ENCODE measurements at regions of chr3 and their contacts with region 1.

Region 1: GRCh38 chr3:128794770-128795649 is 69.0 kb downstream of the RAB7A start:
- DNase-seq: peak; percentile 41 to 75 (median 65)
- H3K4me3 ChIP-seq: no peak overlapping the region
- H3K4me3 Mint-ChIP-seq: peak overlapping the region in 1 of 7 donors; percentile 28
- H3K27ac ChIP-seq: no peak overlapping the region
- H3K27ac Mint-ChIP-seq: peak overlapping the region; percentile 3 to 79 (median 70)
- H3K4me1 ChIP-seq: peaks cover 54% of the 10 kb centered on the region
- H3K4me1 Mint-ChIP-seq: peaks cover 34 to 59% (median 59%) of the 10 kb centered on the region in 3 donors
- H3K27me3 ChIP-seq: no peaks in the 10 kb centered on the region
- H3K27me3 Mint-ChIP-seq: no peaks in the 10 kb centered on the region

Region 2: DNA sequence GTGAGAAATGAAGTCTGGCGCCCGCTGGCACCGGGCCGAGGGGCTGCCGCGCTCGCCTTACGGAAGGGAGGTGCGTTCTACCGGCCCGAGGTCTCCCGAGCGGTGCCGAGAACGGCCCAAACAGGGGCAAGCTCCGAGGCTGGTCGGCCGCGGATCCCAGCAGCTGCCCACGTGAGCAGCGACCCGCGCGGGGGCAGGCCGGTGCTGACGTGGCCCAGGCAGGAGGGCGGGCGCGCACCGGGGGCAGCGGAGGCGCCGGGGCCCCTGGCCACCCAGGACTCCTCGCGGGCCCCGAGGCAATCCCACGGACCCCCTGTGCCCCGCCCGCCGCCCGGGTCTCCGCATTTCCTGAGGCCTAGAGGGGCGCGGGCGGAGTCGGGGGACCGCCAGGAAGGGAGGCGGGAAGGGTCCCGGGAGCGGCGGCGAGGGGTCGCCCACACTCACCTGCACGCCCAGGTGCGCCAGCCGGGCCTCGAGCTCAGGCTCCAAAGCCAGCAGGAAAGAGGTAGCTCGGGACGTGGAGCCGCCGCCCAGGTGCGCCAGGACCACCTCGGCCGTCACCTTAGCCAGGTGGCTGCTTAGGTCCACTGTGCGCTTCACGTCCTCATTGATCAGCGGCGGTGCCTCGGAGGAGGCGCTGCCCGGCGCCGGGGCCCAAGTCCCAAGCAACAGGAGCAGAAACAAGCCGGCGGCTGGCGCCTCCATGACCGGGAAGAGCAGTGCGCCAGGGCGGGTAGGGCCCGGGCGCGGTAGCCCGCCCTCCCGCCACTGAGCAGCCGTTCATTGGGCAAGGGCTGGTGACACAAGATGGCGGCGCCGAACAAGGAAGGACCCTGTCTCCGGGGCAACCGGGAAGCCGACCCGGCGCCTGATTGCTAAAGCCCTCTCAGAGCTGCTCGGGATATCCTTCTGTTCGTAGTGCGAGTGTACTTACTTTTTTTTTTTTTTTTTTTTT is 144.6 kb before region 1 on chr3 and contains the start of gene RPN1:
- CTCF ChIA-PET with region 1: interaction called, 10 read pairs
- POLR2A ChIA-PET with region 1: no interaction called
- DNase-seq: peak; percentile 95 to 98 (median 97)
- H3K4me3 ChIP-seq: peak within 1 kb of the TSS; percentile 81
- H3K4me3 Mint-ChIP-seq: peak within 1 kb of the TSS; percentile 86 to 100 (median 87)
- H3K27ac ChIP-seq: peak within 1 kb of the TSS; percentile 96
- H3K27ac Mint-ChIP-seq: peak within 1 kb of the TSS; percentile 87 to 99 (median 92)
- H3K4me1 ChIP-seq: peaks cover 34% of the 10 kb centered on the region
- H3K4me1 Mint-ChIP-seq: peaks cover 35 to 61% (median 46%) of the 10 kb centered on the region in 3 donors
- H3K27me3 ChIP-seq: no peaks in the 10 kb centered on the region
- H3K27me3 Mint-ChIP-seq: peaks cover 0 to 2% of the 10 kb centered on the region in 2 donors
- total RNA-seq, gene RPN1: 188 to 194 TPM

Region 3: GRCh38 chr3:128725932-128726690 is 68.9 kb before region 1 on chr3 and contains the start of gene RAB7A:
- CTCF ChIA-PET with region 1: interaction called, 11 read pairs
- POLR2A ChIA-PET with region 1: no interaction called
- DNase-seq: peak; percentile 95 to 98 (median 96)
- H3K4me3 ChIP-seq: peak within 1 kb of the TSS; percentile 91
- H3K4me3 Mint-ChIP-seq: peak within 1 kb of the TSS; percentile 89 to 99 (median 97)
- H3K27ac ChIP-seq: peak within 1 kb of the TSS; percentile 92
- H3K27ac Mint-ChIP-seq: peak within 1 kb of the TSS; percentile 86 to 99 (median 96)
- H3K4me1 ChIP-seq: peaks cover 50% of the 10 kb centered on the region
- H3K4me1 Mint-ChIP-seq: peaks cover 46 to 58% (median 56%) of the 10 kb centered on the region in 3 donors
- H3K27me3 ChIP-seq: no peaks in the 10 kb centered on the region
- H3K27me3 Mint-ChIP-seq: peaks cover 0 to 8% of the 10 kb centered on the region in 2 donors
- total RNA-seq, gene RAB7A: 260 to 285 TPM

Region 4: DNA sequence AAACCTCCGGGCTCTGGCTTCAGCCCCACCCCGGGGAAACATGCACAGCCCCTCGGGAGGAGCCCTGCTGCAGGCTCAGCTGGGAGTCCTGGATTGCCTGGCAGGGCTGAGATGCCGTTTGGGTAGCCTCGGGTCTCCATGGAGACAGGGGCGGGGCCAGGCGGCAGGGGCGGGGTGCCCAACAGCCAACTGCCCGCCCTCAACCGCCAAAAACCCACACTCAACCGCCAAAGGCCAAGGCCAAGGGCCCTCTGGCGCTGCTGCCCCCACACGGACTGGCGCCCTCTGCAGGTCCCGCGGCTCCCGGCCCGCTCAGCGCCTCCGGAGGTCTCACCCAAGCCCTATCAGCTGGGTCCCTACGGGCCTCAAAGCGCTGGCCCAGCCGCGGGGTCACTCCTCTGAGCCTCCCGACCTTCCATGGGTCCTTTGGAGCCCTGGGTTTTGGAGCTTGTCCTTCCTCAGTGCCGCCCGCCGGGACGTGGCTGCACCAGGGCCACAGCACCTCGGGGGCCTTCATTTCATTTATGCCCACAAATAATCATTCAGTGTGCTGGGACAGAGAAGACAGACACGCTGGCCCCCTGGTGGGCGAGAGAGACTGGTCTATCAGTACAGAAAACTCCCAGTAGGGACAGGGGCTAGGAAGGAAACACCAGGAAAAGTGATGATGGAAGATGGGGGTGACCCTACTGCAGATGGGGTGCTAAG is 50.9 kb after region 1 on chr3:
- CTCF ChIA-PET with region 1: interaction called, 20 read pairs
- POLR2A ChIA-PET with region 1: no interaction called
- DNase-seq: peak; percentile 69 to 84 (median 70)
- H3K4me3 ChIP-seq: peak overlapping the region; percentile 54
- H3K4me3 Mint-ChIP-seq: peak overlapping the region; percentile 46 to 95 (median 83)
- H3K27ac ChIP-seq: peak overlapping the region; percentile 29
- H3K27ac Mint-ChIP-seq: peak overlapping the region in 7 of 8 donors; percentile 27 to 90 (median 79)
- H3K4me1 ChIP-seq: peaks cover 11% of the 10 kb centered on the region
- H3K4me1 Mint-ChIP-seq: peaks cover 8 to 13% (median 12%) of the 10 kb centered on the region in 3 donors
- H3K27me3 ChIP-seq: no peaks in the 10 kb centered on the region
- H3K27me3 Mint-ChIP-seq: no peaks in the 10 kb centered on the region

Region 5: DNA sequence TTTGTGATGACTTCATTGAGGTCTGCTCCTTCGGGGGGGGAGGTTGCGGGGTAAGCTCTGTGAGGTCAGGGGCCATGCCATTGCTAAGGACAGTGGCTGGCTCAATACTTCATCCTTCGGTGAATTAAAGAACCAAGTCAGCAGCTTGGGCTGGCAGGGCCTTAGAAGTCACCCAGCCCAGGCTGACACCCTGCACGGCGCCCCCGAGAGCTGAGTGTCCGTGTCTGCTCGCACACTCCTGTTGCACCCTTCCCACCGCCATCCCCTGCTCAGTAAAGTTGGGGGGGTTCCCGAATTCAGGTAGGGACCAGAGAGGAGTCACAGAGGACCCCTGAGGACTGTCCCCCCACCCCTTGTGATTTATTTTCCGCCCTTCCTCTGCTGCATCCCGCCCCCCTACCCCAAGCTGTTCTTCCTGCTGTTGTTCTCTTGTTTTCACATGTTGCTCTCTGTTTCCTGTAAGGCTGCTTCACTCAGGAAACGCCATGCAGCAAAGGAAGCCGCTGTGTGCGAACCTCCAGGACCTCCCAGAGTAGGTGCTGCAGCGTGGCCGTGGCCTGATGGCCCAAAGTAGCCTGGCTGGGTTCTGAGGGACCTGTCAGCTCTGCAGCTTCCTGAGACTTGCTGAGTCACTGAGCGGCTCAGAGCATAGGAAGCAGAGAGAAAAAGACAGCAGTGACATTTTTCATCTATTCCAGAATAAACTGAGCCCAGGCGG is 220.5 kb after region 1 on chr3:
- CTCF ChIA-PET with region 1: no interaction called
- POLR2A ChIA-PET with region 1: no interaction called
- DNase-seq: peak; percentile 23 to 66 (median 47)
- H3K4me3 ChIP-seq: peak overlapping the region; percentile 60
- H3K4me3 Mint-ChIP-seq: peak overlapping the region; percentile 66 to 85 (median 77)
- H3K27ac ChIP-seq: peak overlapping the region; percentile 57
- H3K27ac Mint-ChIP-seq: peak overlapping the region; percentile 82 to 100 (median 94)
- H3K4me1 ChIP-seq: peaks cover 40% of the 10 kb centered on the region
- H3K4me1 Mint-ChIP-seq: peaks cover 42 to 50% (median 48%) of the 10 kb centered on the region in 3 donors
- H3K27me3 ChIP-seq: no peaks in the 10 kb centered on the region
- H3K27me3 Mint-ChIP-seq: no peaks in the 10 kb centered on the region